ENCODE measurements at regions of chrX and their contacts with region 1.

Region 1: GRCh38 chrX:21985332-21985777 is 44.8 kb downstream of the SMS start:
- DNase-seq: no peak
- ATAC-seq: peak; percentile 81

Region 2: GRCh38 chrX:21683941-21684340 is 301.4 kb before region 1 on chrX:
- intact Hi-C with region 1: no loop called
- DNase-seq: no peak
- ATAC-seq: no peak

Region 3: GRCh38 chrX:22025751-22026150 is 40.4 kb after region 1 on chrX:
- intact Hi-C with region 1: no loop called
- DNase-seq: no peak
- ATAC-seq: no peak

Region 4: GRCh38 chrX:23554304-23554703 is 1568.9 kb after region 1 on chrX:
- intact Hi-C with region 1: loop called (anchors 10 kb)
- DNase-seq: no peak
- ATAC-seq: no peak

Region 5: DNA sequence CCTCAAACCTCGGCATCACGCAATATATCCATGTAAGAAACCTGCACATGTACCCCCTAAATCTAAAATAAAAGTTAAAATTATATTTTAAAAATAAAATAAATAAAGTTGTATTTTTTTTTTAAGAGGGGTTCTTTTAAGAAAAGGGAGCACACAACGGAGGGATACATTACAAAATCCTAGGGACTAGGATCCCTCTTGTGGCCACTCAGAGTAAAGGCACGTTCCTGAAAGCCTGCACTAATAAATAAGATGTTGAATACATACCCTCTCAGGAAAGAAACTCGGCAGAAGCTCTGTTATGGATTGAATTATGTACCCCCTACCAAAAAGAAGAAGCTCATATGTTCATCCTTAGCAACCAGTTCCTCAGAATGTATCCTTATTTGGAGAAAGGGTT is 1631.0 kb after region 1 on chrX:
- intact Hi-C with region 1: loop called (anchors 5 kb)
- DNase-seq: no peak
- ATAC-seq: no peak

Measured in Right ventricle myocardium inferior (tissue), 1 donor.